ENCODE measurements at regions of chr4 and their contacts with region 1.

Region 1: GRCh38 chr4:20544645-20545044 is 155.6 kb upstream of the PACRGL start:
- DNase-seq: peak; percentile 14
- ATAC-seq: peak; percentile 54; the same call in 2 of the 3 replicates
- H3K4me3 ChIP-seq: no peak overlapping the region
- H3K27ac ChIP-seq: no peak overlapping the region
- H3K4me1 ChIP-seq: no peaks in the 10 kb centered on the region
- H3K27me3 ChIP-seq: no peaks in the 10 kb centered on the region
- CTCF ChIP-seq: peak; percentile 48
- EP300 ChIP-seq: no peak
- POLR2A ChIP-seq: no peak
- RAD21 ChIP-seq: no peak

Region 2: GRCh38 chr4:20043991-20044390 is 500.7 kb before region 1 on chr4:
- CTCF ChIA-PET with region 1: no interaction called
- POLR2A ChIA-PET with region 1: no interaction called
- in situ Hi-C with region 1: no loop called
- intact Hi-C with region 1: no loop called
- DNase-seq: no peak
- ATAC-seq: no peak
- H3K4me3 ChIP-seq: no peak overlapping the region
- H3K27ac ChIP-seq: no peak overlapping the region
- H3K4me1 ChIP-seq: no peaks in the 10 kb centered on the region
- H3K27me3 ChIP-seq: no peaks in the 10 kb centered on the region
- CTCF ChIP-seq: no peak
- EP300 ChIP-seq: no peak
- POLR2A ChIP-seq: no peak
- RAD21 ChIP-seq: no peak

Region 3: GRCh38 chr4:20422398-20422797 is 122.2 kb before region 1 on chr4:
- CTCF ChIA-PET with region 1: interaction called, 15 read pairs
- POLR2A ChIA-PET with region 1: no interaction called
- in situ Hi-C with region 1: loop called (anchors 5 kb)
- intact Hi-C with region 1: loop called (anchors 1 kb)
- DNase-seq: peak; percentile 25
- ATAC-seq: peak; percentile 91
- H3K4me3 ChIP-seq: no peak overlapping the region
- H3K27ac ChIP-seq: no peak overlapping the region
- H3K4me1 ChIP-seq: no peaks in the 10 kb centered on the region
- H3K27me3 ChIP-seq: no peaks in the 10 kb centered on the region
- CTCF ChIP-seq: peak; percentile 67
- EP300 ChIP-seq: no peak
- POLR2A ChIP-seq: no peak
- RAD21 ChIP-seq: no peak

Region 4: DNA sequence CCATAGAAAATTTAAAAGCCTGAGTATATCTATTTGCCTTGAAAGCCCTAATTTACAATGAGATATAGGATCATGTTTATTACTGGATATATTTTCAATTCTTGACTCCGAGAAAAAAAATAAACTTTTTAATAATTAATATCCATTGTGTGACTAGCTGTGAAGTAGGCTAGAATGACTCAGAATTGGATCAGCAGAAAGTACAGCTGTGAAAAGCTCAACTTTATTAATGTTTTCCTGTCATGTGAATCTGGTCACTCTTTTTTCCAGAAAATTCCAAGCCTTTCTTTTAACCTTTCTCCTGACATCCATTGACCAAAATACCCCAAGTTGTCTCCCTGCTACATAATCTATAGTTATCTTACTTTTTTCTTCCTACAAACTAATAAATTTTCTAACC is 16.1 kb before region 1 on chr4:
- CTCF ChIA-PET with region 1: no interaction called
- POLR2A ChIA-PET with region 1: no interaction called
- in situ Hi-C with region 1: no loop called
- intact Hi-C with region 1: no loop called
- DNase-seq: no peak
- ATAC-seq: no peak
- H3K4me3 ChIP-seq: no peak overlapping the region
- H3K27ac ChIP-seq: no peak overlapping the region
- H3K4me1 ChIP-seq: no peaks in the 10 kb centered on the region
- H3K27me3 ChIP-seq: no peaks in the 10 kb centered on the region
- CTCF ChIP-seq: no peak
- EP300 ChIP-seq: no peak
- POLR2A ChIP-seq: no peak
- RAD21 ChIP-seq: no peak

Region 5: DNA sequence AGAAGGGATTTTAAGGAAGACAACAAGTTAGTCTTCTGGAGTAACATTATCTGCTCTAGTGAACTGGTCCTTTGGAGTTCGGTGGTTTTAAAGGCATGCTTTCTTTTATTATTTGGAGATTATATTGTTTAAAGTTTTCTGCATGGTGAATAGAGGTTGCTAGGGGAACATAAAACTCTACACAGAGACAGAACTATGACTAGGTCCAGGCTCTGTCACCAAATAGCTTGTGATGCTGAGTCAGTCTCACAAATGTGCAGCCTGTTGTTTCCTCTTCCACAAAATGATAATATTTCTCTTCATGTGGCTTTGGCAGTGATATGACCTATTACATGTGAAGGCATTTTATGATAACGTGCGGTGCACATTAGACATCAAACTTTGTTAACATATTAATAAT is 288.2 kb after region 1 on chr4:
- CTCF ChIA-PET with region 1: no interaction called
- POLR2A ChIA-PET with region 1: no interaction called
- in situ Hi-C with region 1: no loop called
- intact Hi-C with region 1: no loop called
- DNase-seq: no peak
- ATAC-seq: no peak
- H3K4me3 ChIP-seq: no peak overlapping the region
- H3K27ac ChIP-seq: no peak overlapping the region
- H3K4me1 ChIP-seq: no peaks in the 10 kb centered on the region
- H3K27me3 ChIP-seq: no peaks in the 10 kb centered on the region
- CTCF ChIP-seq: no peak
- EP300 ChIP-seq: no peak
- POLR2A ChIP-seq: no peak
- RAD21 ChIP-seq: no peak

Measured in HepG2 (cell line).